Activated naive CD4-positive, alpha-beta T cell treated with anti-CD3 and anti-CD28 coated beads for 36 hours (primary cell): ENCODE measurements at regions of chr5 and their contacts with region 1.

Region 1: GRCh38 chr5:40277161-40277906 is 402.4 kb upstream of the PTGER4 start:
- DNase-seq: peak; percentile 67
- H3K4me3 Mint-ChIP-seq: no peak overlapping the region
- H3K27ac Mint-ChIP-seq: peak overlapping the region; percentile 95
- H3K4me1 Mint-ChIP-seq: peaks cover 73% of the 10 kb centered on the region
- H3K27me3 Mint-ChIP-seq: no peaks in the 10 kb centered on the region

Region 2: GRCh38 chr5:39217365-39218281 is 1059.7 kb before region 1 on chr5:
- CTCF ChIA-PET with region 1: no interaction called
- intact Hi-C with region 1: loop called (anchors 10 kb)
- DNase-seq: peak; percentile 91
- H3K4me3 Mint-ChIP-seq: peak overlapping the region; percentile 72
- H3K27ac Mint-ChIP-seq: peak overlapping the region; percentile 91
- H3K4me1 Mint-ChIP-seq: peaks cover 70% of the 10 kb centered on the region
- H3K27me3 Mint-ChIP-seq: no peaks in the 10 kb centered on the region

Region 3: GRCh38 chr5:40210694-40211093 is 66.6 kb before region 1 on chr5:
- CTCF ChIA-PET with region 1: no interaction called
- intact Hi-C with region 1: loop called (anchors 1 kb)
- DNase-seq: no peak
- H3K4me3 Mint-ChIP-seq: no peak overlapping the region
- H3K27ac Mint-ChIP-seq: peak overlapping the region; percentile 98
- H3K4me1 Mint-ChIP-seq: peaks cover 63% of the 10 kb centered on the region
- H3K27me3 Mint-ChIP-seq: no peaks in the 10 kb centered on the region

Region 4: GRCh38 chr5:40333459-40334244 is 56.3 kb after region 1 on chr5:
- CTCF ChIA-PET with region 1: no interaction called
- intact Hi-C with region 1: loop called (anchors 1 kb)
- DNase-seq: peak; percentile 63
- H3K4me3 Mint-ChIP-seq: no peak overlapping the region
- H3K27ac Mint-ChIP-seq: peak overlapping the region; percentile 41
- H3K4me1 Mint-ChIP-seq: peaks cover 15% of the 10 kb centered on the region
- H3K27me3 Mint-ChIP-seq: peaks cover 3% of the 10 kb centered on the region

Region 5: DNA sequence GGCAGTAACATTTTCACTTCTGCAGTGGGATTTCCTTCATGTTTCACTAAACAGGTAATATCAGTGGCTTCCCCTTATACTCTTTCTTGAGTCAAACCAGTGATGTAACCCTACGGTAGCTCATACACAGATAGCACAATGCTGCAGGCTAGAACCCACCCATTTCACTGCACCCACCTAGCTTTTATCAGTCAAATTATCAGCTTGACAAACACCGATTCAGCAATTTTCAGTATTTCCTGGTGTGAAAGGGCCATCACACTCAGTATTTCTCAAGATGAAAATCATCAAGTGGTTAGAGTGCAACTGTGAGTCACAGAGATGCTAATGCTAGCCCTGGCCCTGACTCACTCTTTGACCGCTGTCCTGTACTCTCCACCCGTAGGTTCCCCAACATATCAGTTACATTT is 160.1 kb after region 1 on chr5:
- CTCF ChIA-PET with region 1: interaction called, 3 read pairs
- intact Hi-C with region 1: loop called (anchors 1 kb)
- DNase-seq: peak; percentile 19
- H3K4me3 Mint-ChIP-seq: no peak overlapping the region
- H3K27ac Mint-ChIP-seq: peak overlapping the region; percentile 94
- H3K4me1 Mint-ChIP-seq: peaks cover 81% of the 10 kb centered on the region
- H3K27me3 Mint-ChIP-seq: no peaks in the 10 kb centered on the region

Region 6: GRCh38 chr5:40688127-40688761 is 410.9 kb after region 1 on chr5:
- CTCF ChIA-PET with region 1: interaction called, 3 read pairs
- intact Hi-C with region 1: loop called (anchors 1 kb)
- DNase-seq: peak; percentile 95
- H3K4me3 Mint-ChIP-seq: peak overlapping the region; percentile 89
- H3K27ac Mint-ChIP-seq: peak overlapping the region; percentile 99
- H3K4me1 Mint-ChIP-seq: peaks cover 64% of the 10 kb centered on the region
- H3K27me3 Mint-ChIP-seq: no peaks in the 10 kb centered on the region

Region 7: DNA sequence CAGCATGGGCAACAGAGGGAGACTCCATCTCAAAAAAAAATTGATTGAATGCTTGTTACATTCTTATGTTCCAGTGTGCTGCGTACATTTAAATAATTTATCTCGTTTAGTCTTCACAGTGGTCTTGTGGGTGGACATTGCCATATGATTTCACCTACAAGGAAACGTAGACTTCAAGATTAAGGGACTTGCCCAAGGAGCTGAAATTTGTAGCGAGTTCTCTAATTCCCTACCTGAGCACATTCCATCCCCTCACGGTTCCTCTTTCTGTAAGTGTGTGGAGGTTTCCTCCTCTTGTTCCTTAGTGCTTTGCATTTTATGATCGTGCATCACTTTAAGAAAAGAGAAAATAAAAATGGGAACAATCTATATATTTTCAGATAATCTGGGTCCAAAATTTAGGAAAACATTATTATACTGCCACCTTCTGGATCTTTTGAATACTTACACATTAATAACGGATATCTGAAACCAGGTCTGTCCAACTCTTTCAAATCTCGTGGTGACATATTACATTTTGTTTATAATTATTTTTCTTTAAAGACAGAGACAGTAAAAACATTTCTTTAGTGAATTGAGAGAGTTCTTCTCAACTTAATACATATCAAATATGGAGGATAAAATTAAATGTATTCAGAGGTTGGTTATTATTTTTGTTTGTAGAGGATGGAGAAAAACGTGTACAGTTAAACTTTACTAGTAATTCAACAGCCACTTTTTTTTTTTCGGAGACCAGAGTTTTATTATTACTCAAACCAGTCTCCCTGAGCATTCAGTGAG is 602.0 kb after region 1 on chr5:
- CTCF ChIA-PET with region 1: no interaction called
- intact Hi-C with region 1: loop called (anchors 5 kb)
- DNase-seq: no peak
- H3K4me3 Mint-ChIP-seq: no peak overlapping the region
- H3K27ac Mint-ChIP-seq: no peak overlapping the region
- H3K4me1 Mint-ChIP-seq: peaks cover 4% of the 10 kb centered on the region
- H3K27me3 Mint-ChIP-seq: no peaks in the 10 kb centered on the region